PC-9 (cell line): ENCODE measurements at regions of chr11 and their contacts with region 1.

Region 1: DNA sequence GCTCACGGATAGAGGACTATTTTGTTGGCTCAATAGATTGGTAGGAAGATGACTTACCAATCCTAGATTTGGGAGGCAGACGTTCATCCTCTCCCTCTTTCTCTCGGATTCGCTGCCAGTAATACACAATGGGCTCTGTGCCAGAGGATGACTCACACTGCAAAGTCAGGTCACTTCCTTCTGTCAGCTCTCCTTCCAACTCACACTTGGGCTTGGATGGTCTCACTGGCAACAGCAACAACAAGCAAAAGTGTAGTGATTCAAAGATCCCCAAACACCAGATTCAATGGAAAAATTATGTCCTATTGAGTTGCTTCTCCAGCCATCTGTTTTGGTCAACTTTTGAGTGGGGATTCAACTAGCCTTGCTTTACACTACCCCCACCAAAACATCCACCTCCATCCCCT is 21.7 kb upstream of the HSPA8 start:
- DNase-seq: peak; percentile 90 to 95
- H3K4me3 ChIP-seq: no peak overlapping the region
- H3K27ac ChIP-seq: peak overlapping the region; percentile 38
- H3K4me1 ChIP-seq: peaks cover 22% of the 10 kb centered on the region
- H3K27me3 ChIP-seq: no peaks in the 10 kb centered on the region
- CTCF ChIP-seq: no peak

Region 2: GRCh38 chr11:122893131-122893530 is 190.5 kb before region 1 on chr11:
- CTCF ChIA-PET with region 1: no interaction called
- POLR2A ChIA-PET with region 1: no interaction called
- intact Hi-C with region 1: no loop called
- DNase-seq: no peak
- H3K4me3 ChIP-seq: no peak overlapping the region
- H3K27ac ChIP-seq: no peak overlapping the region
- H3K4me1 ChIP-seq: peaks cover 9% of the 10 kb centered on the region
- H3K27me3 ChIP-seq: no peaks in the 10 kb centered on the region
- CTCF ChIP-seq: no peak

Region 3: GRCh38 chr11:122933416-122933815 is 150.2 kb before region 1 on chr11:
- CTCF ChIA-PET with region 1: no interaction called
- POLR2A ChIA-PET with region 1: no interaction called
- intact Hi-C with region 1: no loop called
- DNase-seq: no peak
- H3K4me3 ChIP-seq: no peak overlapping the region
- H3K27ac ChIP-seq: no peak overlapping the region
- H3K4me1 ChIP-seq: no peaks in the 10 kb centered on the region
- H3K27me3 ChIP-seq: no peaks in the 10 kb centered on the region
- CTCF ChIP-seq: no peak

Region 4: GRCh38 chr11:122981388-122982264 is 102.0 kb before region 1 on chr11 and contains the start of gene BSX:
- CTCF ChIA-PET with region 1: no interaction called
- POLR2A ChIA-PET with region 1: no interaction called
- intact Hi-C with region 1: no loop called
- DNase-seq: peak in 1 of 2 experiments; percentile 49
- H3K4me3 ChIP-seq: no peak within 1 kb of the TSS
- H3K27ac ChIP-seq: no peak within 1 kb of the TSS
- H3K4me1 ChIP-seq: no peaks in the 10 kb centered on the region
- H3K27me3 ChIP-seq: peaks cover 94% of the 10 kb centered on the region
- CTCF ChIP-seq: no peak
- total RNA-seq, gene BSX: not detected in 2 replicates

Region 5: DNA sequence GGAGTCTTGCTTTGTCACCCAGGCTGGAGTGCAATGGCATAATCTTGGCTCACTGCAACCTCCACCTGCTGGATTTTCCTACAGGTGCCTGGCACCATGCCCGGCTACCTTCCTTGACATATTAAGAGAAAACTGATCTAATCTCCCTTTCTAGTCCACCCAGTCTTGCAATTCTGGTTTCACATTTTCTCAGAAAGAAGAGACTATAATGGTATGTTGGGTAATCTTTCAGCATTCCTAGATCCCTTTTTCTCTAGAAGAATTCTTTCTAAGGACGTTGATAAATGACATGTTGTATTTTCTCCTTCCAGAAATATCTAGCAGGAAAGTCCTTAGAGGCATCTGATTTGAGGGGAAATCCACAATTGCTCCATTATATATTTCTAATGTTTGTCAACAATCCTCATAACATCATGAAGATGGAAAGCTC is 11.3 kb before region 1 on chr11:
- CTCF ChIA-PET with region 1: no interaction called
- POLR2A ChIA-PET with region 1: no interaction called
- intact Hi-C with region 1: loop called (anchors 1 kb)
- DNase-seq: peak; percentile 89 to 97
- H3K4me3 ChIP-seq: no peak overlapping the region
- H3K27ac ChIP-seq: peak overlapping the region; percentile 55
- H3K4me1 ChIP-seq: peaks cover 19% of the 10 kb centered on the region
- H3K27me3 ChIP-seq: no peaks in the 10 kb centered on the region
- CTCF ChIP-seq: no peak

Region 6: GRCh38 chr11:123209591-123209990 is 126.0 kb after region 1 on chr11:
- CTCF ChIA-PET with region 1: no interaction called
- POLR2A ChIA-PET with region 1: interaction called, 17 read pairs
- intact Hi-C with region 1: no loop called
- DNase-seq: no peak
- H3K4me3 ChIP-seq: no peak overlapping the region
- H3K27ac ChIP-seq: no peak overlapping the region
- H3K4me1 ChIP-seq: no peaks in the 10 kb centered on the region
- H3K27me3 ChIP-seq: no peaks in the 10 kb centered on the region
- CTCF ChIP-seq: no peak